ENCODE measurements at regions of chr19 and their contacts with region 1.

Region 1: DNA sequence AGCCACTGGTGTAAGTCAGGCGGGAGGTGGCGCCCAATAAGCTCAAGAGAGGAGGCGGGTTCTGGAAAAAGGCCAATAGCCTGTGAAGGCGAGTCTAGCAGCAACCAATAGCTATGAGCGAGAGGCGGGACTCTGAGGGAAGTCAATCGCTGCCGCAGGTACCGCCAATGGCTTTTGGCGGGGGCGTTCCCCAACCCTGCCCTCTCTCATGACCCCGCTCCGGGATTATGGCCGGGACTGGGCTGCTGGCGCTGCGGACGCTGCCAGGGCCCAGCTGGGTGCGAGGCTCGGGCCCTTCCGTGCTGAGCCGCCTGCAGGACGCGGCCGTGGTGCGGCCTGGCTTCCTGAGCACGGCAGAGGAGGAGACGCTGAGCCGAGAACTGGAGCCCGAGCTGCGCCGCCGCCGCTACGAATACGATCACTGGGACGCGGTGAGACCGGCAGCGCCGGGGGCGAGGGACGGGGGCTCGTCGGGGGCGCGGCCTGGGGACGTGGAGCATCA is at the start of gene ALKBH7:
- DNase-seq: peak; percentile 92 to 100
- ATAC-seq: peak; percentile 77 to 89 (median 80)
- H3K4me3 ChIP-seq: peak within 1 kb of the TSS; percentile 79
- H3K4me3 Mint-ChIP-seq: peak within 1 kb of the TSS; percentile 91
- H3K27ac ChIP-seq: peak within 1 kb of the TSS; percentile 97
- H3K27ac Mint-ChIP-seq: peak within 1 kb of the TSS; percentile 88 to 97
- H3K4me1 ChIP-seq: peaks cover 15% of the 10 kb centered on the region
- H3K4me1 Mint-ChIP-seq: peaks cover 15 to 25% of the 10 kb centered on the region in 2 donors
- H3K27me3 ChIP-seq: no peaks in the 10 kb centered on the region
- H3K27me3 Mint-ChIP-seq: no peaks in the 10 kb centered on the region
- CTCF ChIP-seq: no peak
- total RNA-seq, gene ALKBH7: 23.7 to 30.4 (median 25.9) TPM

Region 2: GRCh38 chr19:6325614-6326013 is 47.0 kb before region 1 on chr19:
- intact Hi-C with region 1: no loop called
- DNase-seq: no peak
- ATAC-seq: no peak
- H3K4me3 ChIP-seq: no peak overlapping the region
- H3K4me3 Mint-ChIP-seq: no peak overlapping the region
- H3K27ac ChIP-seq: no peak overlapping the region
- H3K27ac Mint-ChIP-seq: no peak overlapping the region
- H3K4me1 ChIP-seq: no peaks in the 10 kb centered on the region
- H3K4me1 Mint-ChIP-seq: no peaks in the 10 kb centered on the region
- H3K27me3 ChIP-seq: no peaks in the 10 kb centered on the region
- H3K27me3 Mint-ChIP-seq: peaks cover 7 to 12% of the 10 kb centered on the region in 2 donors
- CTCF ChIP-seq: no peak

Region 3: GRCh38 chr19:6362027-6362350 is 10.7 kb before region 1 on chr19:
- intact Hi-C with region 1: loop called (anchors 1 kb)
- DNase-seq: no peak
- ATAC-seq: no peak
- H3K4me3 ChIP-seq: peak overlapping the region; percentile 74
- H3K4me3 Mint-ChIP-seq: peak overlapping the region; percentile 89
- H3K27ac ChIP-seq: peak overlapping the region; percentile 84
- H3K27ac Mint-ChIP-seq: peak overlapping the region; percentile 78 to 96
- H3K4me1 ChIP-seq: peaks cover 26% of the 10 kb centered on the region
- H3K4me1 Mint-ChIP-seq: peaks cover 4 to 12% of the 10 kb centered on the region in 2 donors
- H3K27me3 ChIP-seq: no peaks in the 10 kb centered on the region
- H3K27me3 Mint-ChIP-seq: peaks cover 0 to 3% of the 10 kb centered on the region in 2 donors
- CTCF ChIP-seq: no peak

Region 4: DNA sequence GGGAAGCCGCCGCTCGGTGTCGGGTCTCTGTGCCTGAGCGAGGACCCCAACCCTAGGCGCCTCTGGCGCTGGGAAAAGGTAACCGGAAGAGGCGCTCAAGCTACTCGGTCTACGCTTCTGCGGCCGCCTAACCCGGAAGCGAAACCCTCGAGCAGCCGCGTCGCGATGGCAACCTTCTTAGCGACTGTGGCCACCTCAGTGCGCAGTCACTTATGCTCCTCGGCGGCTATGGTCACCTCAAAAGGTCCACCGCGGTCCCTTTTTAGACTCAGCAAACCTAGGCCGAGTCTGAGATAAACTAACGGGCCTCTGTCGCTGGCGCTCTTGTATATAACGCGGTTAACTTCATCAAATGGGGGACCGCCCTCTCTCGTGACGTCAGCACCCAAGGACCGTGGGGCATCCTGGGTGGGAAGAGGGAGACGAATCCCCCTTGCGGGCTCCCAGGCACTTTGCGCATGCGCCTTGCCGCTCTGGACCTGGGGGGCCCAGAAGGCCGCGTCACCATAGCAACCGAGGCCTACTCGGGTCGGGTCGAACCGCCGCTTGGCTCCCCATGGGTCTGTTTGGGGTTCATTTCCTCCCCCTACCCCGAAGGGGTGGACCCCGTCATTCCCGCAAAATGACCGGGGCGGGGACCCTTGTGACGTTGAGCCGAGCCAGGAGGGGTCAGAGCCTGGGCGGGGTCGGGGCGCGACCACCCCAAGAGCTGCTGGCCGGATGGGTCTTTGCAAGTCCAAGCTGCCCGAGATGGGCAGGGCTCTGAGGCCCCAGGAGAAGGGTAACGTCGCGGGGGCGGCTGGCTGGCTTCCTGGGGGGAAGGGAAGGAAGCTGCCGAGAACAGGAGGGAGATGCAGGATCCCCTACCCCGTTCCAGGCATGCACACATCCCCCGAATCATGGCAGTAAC is 20.7 kb after region 1 on chr19 and contains the start of gene GTF2F1:
- intact Hi-C with region 1: loop called (anchors 1 kb)
- DNase-seq: peak; percentile 89 to 98
- ATAC-seq: peak; percentile 86 to 91 (median 87)
- H3K4me3 ChIP-seq: peak within 1 kb of the TSS; percentile 89
- H3K4me3 Mint-ChIP-seq: peak within 1 kb of the TSS; percentile 97
- H3K27ac ChIP-seq: peak within 1 kb of the TSS; percentile 96
- H3K27ac Mint-ChIP-seq: peak within 1 kb of the TSS; percentile 96 to 97
- H3K4me1 ChIP-seq: peaks cover 18% of the 10 kb centered on the region
- H3K4me1 Mint-ChIP-seq: peaks cover 23 to 30% of the 10 kb centered on the region in 2 donors
- H3K27me3 ChIP-seq: no peaks in the 10 kb centered on the region
- H3K27me3 Mint-ChIP-seq: no peaks in the 10 kb centered on the region
- CTCF ChIP-seq: no peak
- total RNA-seq, gene GTF2F1: 56.6 to 63.9 (median 63.9) TPM